ENCODE measurements at regions of chr5 and their contacts with region 1.

Region 1: GRCh38 chr5:134758504-134759341 is at the start of gene DDX46:
- DNase-seq: peak; percentile 97
- H3K4me3 Mint-ChIP-seq: peak within 1 kb of the TSS; percentile 99
- H3K27ac Mint-ChIP-seq: peak within 1 kb of the TSS; percentile 80
- H3K4me1 Mint-ChIP-seq: peaks cover 34% of the 10 kb centered on the region
- H3K27me3 Mint-ChIP-seq: no peaks in the 10 kb centered on the region
- total RNA-seq, gene DDX46: 47.3 to 48.0 TPM

Region 2: DNA sequence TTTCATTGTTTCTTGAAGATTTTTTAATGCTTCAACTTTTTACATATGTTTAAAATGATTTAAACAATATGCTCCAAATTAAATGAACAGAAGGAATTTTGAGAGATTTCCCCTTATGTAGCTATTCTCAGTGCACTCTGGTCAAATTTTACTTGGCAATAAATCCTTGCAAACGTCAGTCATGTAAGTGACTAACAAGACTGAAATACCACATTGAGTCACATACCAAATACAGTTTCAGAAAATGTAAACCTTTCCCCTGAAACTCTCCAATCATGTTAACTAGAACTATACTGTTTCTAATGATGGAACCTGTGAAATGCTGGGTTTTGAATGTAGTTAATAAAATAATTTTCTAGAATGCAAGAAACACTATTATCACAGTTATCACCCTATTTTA is 155.7 kb before region 1 on chr5:
- CTCF ChIA-PET with region 1: interaction called, 3 read pairs
- intact Hi-C with region 1: loop called (anchors 5 kb)
- DNase-seq: no peak
- H3K4me3 Mint-ChIP-seq: no peak overlapping the region
- H3K27ac Mint-ChIP-seq: no peak overlapping the region
- H3K4me1 Mint-ChIP-seq: peaks cover 42% of the 10 kb centered on the region
- H3K27me3 Mint-ChIP-seq: no peaks in the 10 kb centered on the region

Region 3: DNA sequence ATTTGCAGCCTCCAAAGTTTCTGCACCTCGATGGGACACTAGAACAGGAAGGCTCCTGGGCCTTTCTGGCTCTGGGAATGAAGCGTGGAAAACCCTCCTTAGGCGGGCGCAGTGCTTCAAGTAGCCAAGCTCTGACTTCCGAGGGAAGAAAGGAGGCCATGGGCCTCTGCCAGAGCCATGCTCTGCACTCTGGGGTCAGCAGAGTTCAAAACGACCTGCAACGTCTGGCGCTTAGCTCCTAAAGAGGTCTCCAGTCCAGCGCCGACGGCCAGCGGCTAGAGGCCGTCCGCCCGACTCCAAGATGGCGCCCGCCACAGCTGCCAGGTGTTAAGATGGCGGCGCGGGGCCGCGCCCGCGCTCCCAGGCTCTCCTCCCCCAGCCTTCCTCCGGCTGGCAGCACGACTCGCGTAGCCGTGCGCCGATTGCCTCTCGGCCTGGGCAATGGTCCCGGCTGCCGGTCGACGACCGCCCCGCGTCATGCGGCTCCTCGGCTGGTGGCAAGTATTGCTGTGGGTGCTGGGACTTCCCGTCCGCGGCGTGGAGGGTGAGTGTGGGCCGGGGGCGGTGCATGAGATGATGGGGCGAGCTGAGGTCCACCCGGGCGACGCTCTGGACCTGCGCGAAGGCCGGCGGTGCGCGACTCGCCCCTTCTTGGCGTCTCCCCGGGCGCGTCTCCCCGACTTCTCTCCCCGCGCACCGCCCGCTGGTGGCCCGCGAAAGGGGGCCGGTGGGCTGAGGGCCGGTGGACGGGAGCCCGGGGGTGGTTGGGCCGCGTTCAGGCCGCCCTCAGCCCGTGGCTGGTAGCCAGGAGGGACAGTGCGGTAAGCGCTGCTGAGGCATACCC is 115.5 kb after region 1 on chr5 and contains the start of gene TXNDC15:
- CTCF ChIA-PET with region 1: no interaction called
- intact Hi-C with region 1: loop called (anchors 1 kb)
- DNase-seq: peak; percentile 84
- H3K4me3 Mint-ChIP-seq: peak within 1 kb of the TSS; percentile 89
- H3K27ac Mint-ChIP-seq: peak within 1 kb of the TSS; percentile 92
- H3K4me1 Mint-ChIP-seq: peaks cover 30% of the 10 kb centered on the region
- H3K27me3 Mint-ChIP-seq: no peaks in the 10 kb centered on the region
- total RNA-seq, gene TXNDC15: 19.8 to 20.9 TPM

Measured in activated naive CD4-positive, alpha-beta T cell treated with anti-CD3 and anti-CD28 coated beads for 36 hours (primary cell).